ENCODE measurements at regions of chr17 and their contacts with region 1.

Region 1: DNA sequence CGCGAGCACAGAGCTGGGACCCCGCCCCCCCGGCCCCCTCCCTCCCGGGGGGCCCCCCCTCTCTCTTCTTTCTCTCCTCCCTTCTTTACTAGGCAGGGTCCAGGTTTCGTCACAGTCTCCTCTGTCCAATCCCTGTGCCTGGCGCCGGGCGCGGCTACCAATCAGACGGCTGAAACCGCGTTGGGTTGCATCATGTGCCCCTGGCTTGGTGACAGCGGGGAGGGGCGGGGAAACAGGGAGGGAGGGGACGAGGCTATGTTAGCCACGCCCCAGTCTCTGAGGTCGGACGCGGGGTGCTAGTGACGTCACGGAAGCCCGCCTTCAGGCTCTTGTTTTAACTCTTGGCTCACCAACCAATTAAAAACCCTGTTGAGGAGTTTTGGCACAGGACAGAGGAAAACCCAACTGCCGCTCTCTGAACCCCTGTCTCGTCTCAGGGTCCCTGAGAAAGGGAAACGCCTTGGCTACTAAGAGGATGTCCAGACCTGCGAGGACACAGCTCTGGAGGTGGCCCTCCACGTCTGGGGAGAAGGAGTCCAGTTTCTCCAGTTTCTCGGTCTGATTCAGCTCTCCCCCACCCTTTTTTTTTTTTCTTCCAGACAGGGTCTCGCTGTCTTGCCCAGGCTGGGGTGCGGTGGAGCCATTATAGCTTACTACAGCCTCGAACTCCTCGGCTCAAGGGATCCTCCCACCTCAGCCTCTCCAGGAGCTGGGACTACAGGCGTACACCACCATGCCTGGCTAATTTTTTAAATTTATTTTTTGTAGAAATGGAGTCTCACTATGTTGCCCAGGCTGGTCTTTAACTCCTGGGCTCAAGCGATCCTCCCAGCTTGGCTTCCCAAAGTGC is 439 bp upstream of the PLEKHH3 start:
- DNase-seq: peak; percentile 80 to 98 (median 92)
- ATAC-seq: peak; percentile 90
- H3K4me3 ChIP-seq: peak overlapping the region; percentile 73
- H3K4me3 Mint-ChIP-seq: peak overlapping the region; percentile 79 to 94 (median 90)
- H3K27ac ChIP-seq: peak overlapping the region; percentile 64
- H3K27ac Mint-ChIP-seq: peak overlapping the region in 8 of 9 donors; percentile 7 to 91 (median 82)
- H3K4me1 ChIP-seq: peaks cover 47 to 57% of the 10 kb centered on the region in 2 donors
- H3K4me1 Mint-ChIP-seq: peaks cover 21 to 60% (median 50%) of the 10 kb centered on the region in 7 donors
- H3K27me3 ChIP-seq: peaks cover 5 to 21% of the 10 kb centered on the region in 2 donors
- H3K27me3 Mint-ChIP-seq: peaks cover 26 to 49% (median 36%) of the 10 kb centered on the region in 5 donors

Region 2: DNA sequence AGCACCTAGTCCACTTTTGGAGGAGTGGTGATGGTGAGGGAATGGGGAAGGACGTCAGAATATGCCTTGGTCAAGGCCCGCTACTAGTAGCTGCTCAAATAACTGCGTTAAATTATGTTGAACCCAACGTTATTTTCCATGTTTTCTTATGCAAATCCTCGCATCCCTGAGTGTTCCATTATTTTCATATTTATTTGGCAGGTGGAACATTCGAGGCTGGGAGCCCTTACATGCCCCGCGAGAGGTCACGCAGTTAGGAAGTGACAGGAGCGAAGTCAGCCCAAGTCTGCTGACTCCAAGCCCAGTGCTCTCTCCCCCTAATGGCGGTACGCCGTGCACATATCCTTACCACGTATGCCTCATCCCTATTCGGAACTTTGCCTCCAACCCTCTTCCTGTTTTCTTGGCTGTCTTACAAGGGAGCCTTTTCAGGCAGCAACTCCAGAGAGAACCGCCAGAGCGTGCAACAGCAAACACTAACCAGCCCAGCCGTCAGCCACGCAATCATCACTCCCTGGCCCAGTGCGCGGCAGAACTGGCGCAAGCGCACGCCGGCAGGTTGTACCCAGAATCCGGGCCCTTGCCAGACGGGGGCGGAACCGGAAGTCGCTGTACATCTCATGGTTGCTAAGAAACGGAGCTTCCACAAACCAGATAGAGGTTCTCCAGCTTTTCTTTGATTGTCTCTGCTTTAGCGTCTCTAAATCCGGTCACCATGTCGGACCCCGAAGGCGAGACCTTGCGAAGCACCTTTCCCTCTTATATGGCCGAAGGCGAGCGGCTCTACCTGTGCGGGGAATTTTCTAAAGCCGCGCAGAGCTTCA is 747.0 kb before region 1 on chr17 and contains the start of gene ODAD4:
- CTCF ChIA-PET with region 1: no interaction called
- POLR2A ChIA-PET with region 1: no interaction called
- intact Hi-C with region 1: loop called in 1 of 2 experiments (anchors 2 kb)
- DNase-seq: peak; percentile 87 to 98 (median 97)
- ATAC-seq: peak; percentile 98
- H3K4me3 ChIP-seq: peak within 1 kb of the TSS; percentile 79
- H3K4me3 Mint-ChIP-seq: peak within 1 kb of the TSS; percentile 93 to 100 (median 96)
- H3K27ac ChIP-seq: peak within 1 kb of the TSS; percentile 84
- H3K27ac Mint-ChIP-seq: peak within 1 kb of the TSS; percentile 90 to 100 (median 96)
- H3K4me1 ChIP-seq: peaks cover 9 to 11% of the 10 kb centered on the region in 2 donors
- H3K4me1 Mint-ChIP-seq: peaks cover 18 to 52% (median 24%) of the 10 kb centered on the region in 7 donors
- H3K27me3 ChIP-seq: no peaks in the 10 kb centered on the region
- H3K27me3 Mint-ChIP-seq: no peaks in the 10 kb centered on the region
- total RNA-seq, gene ODAD4: 0.16 to 4.1 (median 1.6) TPM in 4 of 5 experiments, not detected in the other

Region 3: GRCh38 chr17:42536048-42536371 is 141.2 kb before region 1 on chr17 and contains the start of gene NAGLU:
- CTCF ChIA-PET with region 1: no interaction called
- POLR2A ChIA-PET with region 1: no interaction called
- intact Hi-C with region 1: loop called in 1 of 2 experiments (anchors 5 kb)
- DNase-seq: peak; percentile 56 to 93 (median 69)
- ATAC-seq: peak; percentile 91
- H3K4me3 ChIP-seq: peak within 1 kb of the TSS; percentile 71
- H3K4me3 Mint-ChIP-seq: peak within 1 kb of the TSS; percentile 75 to 96 (median 86)
- H3K27ac ChIP-seq: peak within 1 kb of the TSS; percentile 57
- H3K27ac Mint-ChIP-seq: peak within 1 kb of the TSS; percentile 36 to 92 (median 79)
- H3K4me1 ChIP-seq: peaks cover 14 to 24% of the 10 kb centered on the region in 2 donors
- H3K4me1 Mint-ChIP-seq: peaks cover 29 to 50% (median 42%) of the 10 kb centered on the region in 7 donors
- H3K27me3 ChIP-seq: no peaks in the 10 kb centered on the region
- H3K27me3 Mint-ChIP-seq: peaks cover 0 to 9% (median 0%) of the 10 kb centered on the region in 5 donors
- total RNA-seq, gene NAGLU: 18.0 to 27.1 (median 22.3) TPM

Region 4: DNA sequence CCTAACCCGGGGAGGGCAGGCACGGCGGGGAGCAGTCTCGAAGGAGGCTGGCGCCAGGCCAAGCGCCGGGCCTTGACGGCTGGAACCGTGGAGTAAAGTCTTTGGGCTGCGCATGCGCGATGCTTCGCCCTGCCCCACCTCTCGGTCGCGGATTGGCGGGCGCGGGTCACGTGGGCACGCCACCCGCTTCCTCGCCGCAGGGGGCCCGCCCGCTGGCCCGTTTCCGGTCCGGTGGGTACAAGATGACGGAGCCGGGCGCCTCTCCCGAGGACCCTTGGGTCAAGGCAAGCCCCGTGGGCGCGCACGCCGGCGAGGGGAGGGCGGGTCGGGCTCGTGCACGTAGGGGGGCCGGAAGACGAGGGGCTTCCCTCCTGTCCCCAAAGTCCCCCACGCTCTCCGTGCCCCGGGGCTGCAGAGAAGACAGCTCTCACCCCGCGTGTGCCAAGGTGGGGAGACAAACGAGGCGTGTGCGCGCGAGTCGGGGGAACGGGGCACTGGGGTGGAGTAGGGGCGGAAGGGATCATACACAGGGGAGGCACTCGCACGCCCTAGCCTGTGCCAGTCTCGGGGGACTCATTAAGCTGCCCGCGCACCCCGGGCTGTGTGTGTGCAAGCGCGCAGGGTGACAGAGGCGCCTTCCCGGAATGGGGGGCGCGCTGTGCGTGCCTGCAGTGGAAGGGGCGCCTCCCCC is 110.2 kb before region 1 on chr17 and contains the start of gene MLX:
- CTCF ChIA-PET with region 1: no interaction called
- POLR2A ChIA-PET with region 1: no interaction called
- intact Hi-C with region 1: loop called in 1 of 2 experiments (anchors 1 kb)
- DNase-seq: peak; percentile 86 to 96 (median 90)
- ATAC-seq: peak; percentile 80
- H3K4me3 ChIP-seq: peak within 1 kb of the TSS; percentile 76
- H3K4me3 Mint-ChIP-seq: peak within 1 kb of the TSS; percentile 80 to 98 (median 95)
- H3K27ac ChIP-seq: peak within 1 kb of the TSS; percentile 92
- H3K27ac Mint-ChIP-seq: peak within 1 kb of the TSS; percentile 87 to 98 (median 95)
- H3K4me1 ChIP-seq: peaks cover 26 to 27% of the 10 kb centered on the region in 2 donors
- H3K4me1 Mint-ChIP-seq: peaks cover 26 to 57% (median 45%) of the 10 kb centered on the region in 7 donors
- H3K27me3 ChIP-seq: no peaks in the 10 kb centered on the region
- H3K27me3 Mint-ChIP-seq: no peaks in the 10 kb centered on the region
- total RNA-seq, gene MLX: 35.3 to 73.9 (median 65.1) TPM

Region 5: DNA sequence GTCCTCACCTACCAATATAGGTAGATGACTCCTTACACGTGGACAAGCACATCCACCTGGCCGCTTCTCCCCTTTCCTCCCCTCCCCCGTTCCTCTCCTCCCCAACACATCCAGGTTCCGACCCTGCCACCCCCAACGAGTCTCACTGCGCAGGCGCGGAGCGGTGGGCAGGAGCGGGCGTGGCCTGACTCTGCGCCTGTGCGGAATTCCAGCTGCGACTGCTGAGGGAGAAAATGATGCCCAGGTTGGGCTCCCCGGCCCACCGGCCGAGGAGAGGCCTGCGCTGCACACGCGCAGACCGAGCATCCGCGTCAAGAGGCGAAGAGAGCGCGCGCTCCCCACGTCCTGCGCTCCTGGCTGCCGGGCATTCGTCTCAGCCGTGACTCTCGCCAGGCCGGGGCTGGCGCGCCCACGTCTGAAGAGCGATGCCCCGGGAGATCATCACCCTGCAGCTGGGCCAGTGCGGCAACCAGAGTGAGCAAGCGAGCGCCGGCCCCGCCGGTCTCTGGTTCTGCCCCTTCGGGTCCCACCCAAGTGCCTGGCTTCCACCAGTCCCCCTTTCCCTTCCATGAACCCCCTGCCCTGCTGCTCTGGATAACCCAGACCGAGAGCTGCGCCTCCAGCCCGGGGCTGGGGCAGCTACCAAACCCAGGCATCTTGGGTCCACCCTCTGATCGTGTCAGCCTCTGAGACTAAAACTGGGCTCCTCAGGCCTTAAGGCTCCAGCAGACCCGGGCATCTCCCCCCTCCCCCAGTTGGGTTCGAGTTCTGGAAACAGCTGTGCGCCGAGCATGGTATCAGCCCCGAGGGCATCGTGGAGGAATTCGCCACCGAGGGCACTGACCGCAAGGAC is 17.9 kb before region 1 on chr17 and contains the start of gene TUBG2:
- CTCF ChIA-PET with region 1: interaction called, 6 read pairs
- POLR2A ChIA-PET with region 1: interaction called, 4 read pairs
- intact Hi-C with region 1: loop called in 1 of 2 experiments (anchors 1 kb)
- DNase-seq: peak; percentile 46 to 84 (median 56)
- ATAC-seq: peak; percentile 82
- H3K4me3 ChIP-seq: peak within 1 kb of the TSS; percentile 92
- H3K4me3 Mint-ChIP-seq: peak within 1 kb of the TSS; percentile 88 to 95 (median 90)
- H3K27ac ChIP-seq: peak within 1 kb of the TSS; percentile 62
- H3K27ac Mint-ChIP-seq: peak within 1 kb of the TSS; percentile 57 to 91 (median 79)
- H3K4me1 ChIP-seq: peaks cover 0 to 3% of the 10 kb centered on the region in 2 donors
- H3K4me1 Mint-ChIP-seq: peaks cover 13 to 23% (median 19%) of the 10 kb centered on the region in 7 donors
- H3K27me3 ChIP-seq: no peaks in the 10 kb centered on the region
- H3K27me3 Mint-ChIP-seq: peaks cover 0 to 12% (median 6%) of the 10 kb centered on the region in 5 donors
- total RNA-seq, gene TUBG2: 9.0 to 20.3 (median 15.3) TPM

Region 6: GRCh38 chr17:42744806-42745617 is 67.8 kb after region 1 on chr17 and contains the start of gene EZH1:
- CTCF ChIA-PET with region 1: no interaction called
- POLR2A ChIA-PET with region 1: interaction called, 3 read pairs
- intact Hi-C with region 1: loop called in 1 of 2 experiments (anchors 2 kb)
- DNase-seq: peak; percentile 88 to 96 (median 94)
- ATAC-seq: peak; percentile 97
- H3K4me3 ChIP-seq: peak within 1 kb of the TSS; percentile 78
- H3K4me3 Mint-ChIP-seq: peak within 1 kb of the TSS; percentile 83 to 99 (median 94)
- H3K27ac ChIP-seq: peak within 1 kb of the TSS; percentile 90
- H3K27ac Mint-ChIP-seq: peak within 1 kb of the TSS; percentile 86 to 97 (median 94)
- H3K4me1 ChIP-seq: peaks cover 12 to 16% of the 10 kb centered on the region in 2 donors
- H3K4me1 Mint-ChIP-seq: peaks cover 15 to 34% (median 22%) of the 10 kb centered on the region in 7 donors
- H3K27me3 ChIP-seq: no peaks in the 10 kb centered on the region
- H3K27me3 Mint-ChIP-seq: peaks cover 0 to 41% (median 11%) of the 10 kb centered on the region in 5 donors
- total RNA-seq, gene EZH1: 50.9 to 212 (median 95.4) TPM

Region 7: GRCh38 chr17:43024407-43025289 is 347.4 kb after region 1 on chr17 and contains the start of gene RND2:
- CTCF ChIA-PET with region 1: no interaction called
- POLR2A ChIA-PET with region 1: no interaction called
- intact Hi-C with region 1: loop called in 1 of 2 experiments (anchors 5 kb)
- DNase-seq: peak; percentile 65 to 85 (median 77)
- ATAC-seq: peak; percentile 81
- H3K4me3 ChIP-seq: peak within 1 kb of the TSS; percentile 70
- H3K4me3 Mint-ChIP-seq: peak within 1 kb of the TSS; percentile 86 to 95 (median 93)
- H3K27ac ChIP-seq: peak within 1 kb of the TSS; percentile 66
- H3K27ac Mint-ChIP-seq: peak within 1 kb of the TSS; percentile 80 to 91 (median 88)
- H3K4me1 ChIP-seq: peaks cover 21% of the 10 kb centered on the region in 2 donors
- H3K4me1 Mint-ChIP-seq: peaks cover 16 to 28% (median 21%) of the 10 kb centered on the region in 7 donors
- H3K27me3 ChIP-seq: no peaks in the 10 kb centered on the region
- H3K27me3 Mint-ChIP-seq: peaks cover 0 to 16% (median 0%) of the 10 kb centered on the region in 5 donors
- total RNA-seq, gene RND2: 0.08 to 0.74 (median 0.38) TPM in 4 of 5 experiments, not detected in the other

Region 8: GRCh38 chr17:43431714-43432523 is 754.7 kb after region 1 on chr17:
- CTCF ChIA-PET with region 1: no interaction called
- POLR2A ChIA-PET with region 1: no interaction called
- intact Hi-C with region 1: no loop called
- DNase-seq: no peak
- ATAC-seq: no peak
- H3K4me3 ChIP-seq: no peak overlapping the region
- H3K4me3 Mint-ChIP-seq: no peak overlapping the region
- H3K27ac ChIP-seq: no peak overlapping the region
- H3K27ac Mint-ChIP-seq: no peak overlapping the region
- H3K4me1 ChIP-seq: no peaks in the 10 kb centered on the region
- H3K4me1 Mint-ChIP-seq: peaks cover 0 to 2% (median 0%) of the 10 kb centered on the region in 7 donors
- H3K27me3 ChIP-seq: no peaks in the 10 kb centered on the region
- H3K27me3 Mint-ChIP-seq: peaks cover 12 to 39% (median 28%) of the 10 kb centered on the region in 5 donors